CD14-positive monocyte (primary cell): ENCODE measurements at regions of chr9 and their contacts with region 1.

Region 1: GRCh38 chr9:134067904-134068743 is at the start of gene BRD3:
- DNase-seq: peak; percentile 70 to 83 (median 77)
- H3K4me3 ChIP-seq: peak within 1 kb of the TSS; percentile 53 to 87 (median 76)
- H3K4me3 Mint-ChIP-seq: peak within 1 kb of the TSS; percentile 87 to 94
- H3K27ac ChIP-seq: peak within 1 kb of the TSS; percentile 61 to 80
- H3K27ac Mint-ChIP-seq: peak within 1 kb of the TSS; percentile 84 to 95 (median 92)
- H3K4me1 ChIP-seq: peaks cover 37 to 43% of the 10 kb centered on the region in 2 donors
- H3K4me1 Mint-ChIP-seq: peaks cover 38% of the 10 kb centered on the region
- H3K27me3 ChIP-seq: peaks cover 0 to 19% of the 10 kb centered on the region in 2 donors
- H3K27me3 Mint-ChIP-seq: peaks cover 21 to 27% (median 23%) of the 10 kb centered on the region in 3 donors
- CTCF ChIP-seq: no peak
- polyA plus RNA-seq, gene BRD3: 16.4 to 18.2 (median 17.1) TPM

Region 2: GRCh38 chr9:134024828-134025605 is 43.1 kb before region 1 on chr9 and contains the start of gene BRD3OS:
- intact Hi-C with region 1: loop called (anchors 1 to 2 kb)
- DNase-seq: peak; percentile 95 to 99 (median 99)
- H3K4me3 ChIP-seq: peak within 1 kb of the TSS; percentile 63 to 80 (median 70)
- H3K4me3 Mint-ChIP-seq: peak within 1 kb of the TSS; percentile 77 to 88
- H3K27ac ChIP-seq: no peak within 1 kb of the TSS
- H3K27ac Mint-ChIP-seq: peak within 1 kb of the TSS in 5 of 7 donors; percentile 24 to 89 (median 50)
- H3K4me1 ChIP-seq: peaks cover 12 to 13% of the 10 kb centered on the region in 2 donors
- H3K4me1 Mint-ChIP-seq: peaks cover 13% of the 10 kb centered on the region
- H3K27me3 ChIP-seq: no peaks in the 10 kb centered on the region
- H3K27me3 Mint-ChIP-seq: peaks cover 0 to 3% (median 1%) of the 10 kb centered on the region in 3 donors
- CTCF ChIP-seq: no peak
- polyA plus RNA-seq, gene BRD3OS: 2.9 to 6.8 (median 6.6) TPM

Region 3: GRCh38 chr9:134135343-134136118 is 67.4 kb after region 1 on chr9 and contains the start of gene WDR5:
- intact Hi-C with region 1: loop called (anchors 5 kb)
- DNase-seq: peak; percentile 84 to 87 (median 84)
- H3K4me3 ChIP-seq: peak within 1 kb of the TSS; percentile 71 to 100 (median 99)
- H3K4me3 Mint-ChIP-seq: peak within 1 kb of the TSS; percentile 90 to 98
- H3K27ac ChIP-seq: peak within 1 kb of the TSS; percentile 56 to 72
- H3K27ac Mint-ChIP-seq: peak within 1 kb of the TSS; percentile 70 to 87 (median 82)
- H3K4me1 ChIP-seq: peaks cover 35 to 43% of the 10 kb centered on the region in 2 donors
- H3K4me1 Mint-ChIP-seq: peaks cover 43% of the 10 kb centered on the region
- H3K27me3 ChIP-seq: no peaks in the 10 kb centered on the region
- H3K27me3 Mint-ChIP-seq: peaks cover 0 to 1% (median 0%) of the 10 kb centered on the region in 3 donors
- CTCF ChIP-seq: no peak
- polyA plus RNA-seq, gene WDR5: 8.7 to 17.3 (median 10.2) TPM

Region 4: GRCh38 chr9:134929193-134930158 is 861.4 kb after region 1 on chr9:
- intact Hi-C with region 1: loop called in 1 of 2 experiments (anchors 10 kb)
- DNase-seq: peak; percentile 90 to 97 (median 97)
- H3K4me3 ChIP-seq: peak overlapping the region in 2 of 3 experiments; percentile 5 to 68
- H3K4me3 Mint-ChIP-seq: peak overlapping the region; percentile 76 to 85
- H3K27ac ChIP-seq: peak overlapping the region; percentile 70 to 93
- H3K27ac Mint-ChIP-seq: peak overlapping the region; percentile 94 to 98 (median 97)
- H3K4me1 ChIP-seq: peaks cover 99 to 100% of the 10 kb centered on the region in 2 donors
- H3K4me1 Mint-ChIP-seq: peaks cover 96% of the 10 kb centered on the region
- H3K27me3 ChIP-seq: no peaks in the 10 kb centered on the region
- H3K27me3 Mint-ChIP-seq: peaks cover 0 to 4% (median 0%) of the 10 kb centered on the region in 3 donors
- CTCF ChIP-seq: no peak